Naive thymus-derived CD4-positive, alpha-beta T cell (primary cell): ENCODE measurements at regions of chr11 and their contacts with region 1.

Region 1: DNA sequence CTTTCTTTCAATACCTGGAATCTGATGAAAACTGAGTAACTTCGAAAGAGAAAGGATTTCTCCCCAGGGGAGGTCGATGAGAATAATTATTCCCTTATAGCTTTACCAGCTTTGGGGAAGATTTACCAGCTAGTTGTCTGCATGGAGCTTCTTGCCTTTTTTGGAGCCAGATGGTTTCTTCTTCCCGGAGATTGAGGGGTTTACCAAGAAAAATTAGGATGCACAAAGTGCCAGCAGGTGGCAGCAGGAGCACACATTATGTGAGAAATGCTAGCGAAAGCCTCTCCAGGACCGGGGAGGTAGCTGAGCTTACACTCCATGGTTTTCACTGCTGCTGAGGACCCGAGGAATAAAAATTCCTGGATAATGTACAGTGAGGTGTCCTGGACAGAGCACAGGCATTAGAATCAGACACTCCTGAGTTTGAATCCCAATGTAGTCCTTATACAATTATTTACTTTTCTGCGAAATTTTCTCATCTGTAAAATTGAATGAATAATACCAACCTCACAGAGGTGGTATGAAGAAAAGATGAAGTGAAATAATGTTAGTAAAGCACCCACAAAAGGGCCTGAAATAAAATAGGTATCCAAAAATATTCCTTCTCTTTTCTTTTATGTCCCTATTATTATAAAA is 46.0 kb upstream of the PARVA start:
- DNase-seq: peak; percentile 44 to 74 (median 67)
- ATAC-seq: peak; percentile 63
- H3K4me3 ChIP-seq: no peak overlapping the region
- H3K4me3 Mint-ChIP-seq: no peak overlapping the region
- H3K27ac ChIP-seq: no peak overlapping the region
- H3K27ac Mint-ChIP-seq: no peak overlapping the region
- H3K4me1 ChIP-seq: no peaks in the 10 kb centered on the region
- H3K4me1 Mint-ChIP-seq: peaks cover 0 to 12% (median 4%) of the 10 kb centered on the region in 7 donors
- H3K27me3 ChIP-seq: no peaks in the 10 kb centered on the region
- H3K27me3 Mint-ChIP-seq: peaks cover 0 to 4% (median 0%) of the 10 kb centered on the region in 5 donors

Region 2: GRCh38 chr11:12377824-12378593 is 46.7 kb after region 1 on chr11:
- CTCF ChIA-PET with region 1: interaction called, 12 read pairs
- POLR2A ChIA-PET with region 1: interaction called, 4 read pairs
- intact Hi-C with region 1: loop called (anchors 1 to 5 kb)
- DNase-seq: peak in 4 of 9 donors; percentile 18 to 37 (median 23)
- ATAC-seq: peak; percentile 36
- H3K4me3 ChIP-seq: peak overlapping the region; percentile 17
- H3K4me3 Mint-ChIP-seq: peak overlapping the region; percentile 68 to 89 (median 84)
- H3K27ac ChIP-seq: no peak overlapping the region
- H3K27ac Mint-ChIP-seq: peak overlapping the region in 5 of 9 donors; percentile 54 to 82 (median 65)
- H3K4me1 ChIP-seq: peaks cover 0 to 4% of the 10 kb centered on the region in 2 donors
- H3K4me1 Mint-ChIP-seq: peaks cover 6 to 19% (median 14%) of the 10 kb centered on the region in 7 donors
- H3K27me3 ChIP-seq: no peaks in the 10 kb centered on the region
- H3K27me3 Mint-ChIP-seq: peaks cover 24 to 73% (median 49%) of the 10 kb centered on the region in 5 donors

Region 3: DNA sequence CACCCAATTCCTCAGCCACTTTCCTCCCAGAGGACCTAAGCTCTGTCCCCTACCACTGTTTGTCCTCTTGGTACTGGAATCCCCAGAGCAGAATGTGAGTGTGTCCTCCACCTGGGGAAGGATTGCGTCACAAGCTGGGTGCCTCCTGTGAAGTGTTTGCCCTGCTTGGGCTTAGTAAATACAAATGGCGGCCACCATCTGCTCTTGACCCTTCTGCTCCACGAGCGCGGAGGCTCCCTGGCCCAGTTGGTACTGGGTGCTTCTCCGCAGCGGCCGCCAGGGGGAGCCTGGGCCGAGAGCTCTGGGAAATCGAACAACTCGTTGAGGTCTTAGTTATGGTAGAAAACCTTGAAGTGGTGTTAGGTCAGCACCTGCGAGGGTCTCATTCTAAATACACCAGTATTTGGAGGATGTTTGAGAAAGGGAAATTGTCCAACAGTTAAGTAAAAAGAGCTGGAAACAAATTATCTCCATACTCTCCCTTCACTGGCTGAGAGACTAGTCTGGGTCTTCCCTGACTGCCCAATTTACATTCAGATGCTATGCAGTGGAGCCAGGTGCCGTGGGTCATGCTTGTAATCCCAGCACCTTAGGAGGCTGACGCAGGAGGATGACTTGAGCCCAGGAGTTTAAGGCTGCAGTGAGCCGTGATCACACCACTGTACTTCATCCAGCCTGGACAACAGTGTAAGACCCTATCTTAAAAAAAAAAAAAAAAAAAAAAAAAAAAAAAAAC is 268.2 kb after region 1 on chr11:
- CTCF ChIA-PET with region 1: no interaction called
- POLR2A ChIA-PET with region 1: no interaction called
- intact Hi-C with region 1: loop called (anchors 2 to 5 kb)
- DNase-seq: peak in 5 of 9 donors; percentile 8 to 57 (median 13)
- ATAC-seq: peak; percentile 26
- H3K4me3 ChIP-seq: no peak overlapping the region
- H3K4me3 Mint-ChIP-seq: no peak overlapping the region
- H3K27ac ChIP-seq: no peak overlapping the region
- H3K27ac Mint-ChIP-seq: peak overlapping the region in 1 of 9 donors; percentile 25
- H3K4me1 ChIP-seq: peaks cover 0 to 17% of the 10 kb centered on the region in 2 donors
- H3K4me1 Mint-ChIP-seq: peaks cover 3 to 25% (median 18%) of the 10 kb centered on the region in 7 donors
- H3K27me3 ChIP-seq: no peaks in the 10 kb centered on the region
- H3K27me3 Mint-ChIP-seq: peaks cover 16 to 45% (median 28%) of the 10 kb centered on the region in 5 donors

Region 4: DNA sequence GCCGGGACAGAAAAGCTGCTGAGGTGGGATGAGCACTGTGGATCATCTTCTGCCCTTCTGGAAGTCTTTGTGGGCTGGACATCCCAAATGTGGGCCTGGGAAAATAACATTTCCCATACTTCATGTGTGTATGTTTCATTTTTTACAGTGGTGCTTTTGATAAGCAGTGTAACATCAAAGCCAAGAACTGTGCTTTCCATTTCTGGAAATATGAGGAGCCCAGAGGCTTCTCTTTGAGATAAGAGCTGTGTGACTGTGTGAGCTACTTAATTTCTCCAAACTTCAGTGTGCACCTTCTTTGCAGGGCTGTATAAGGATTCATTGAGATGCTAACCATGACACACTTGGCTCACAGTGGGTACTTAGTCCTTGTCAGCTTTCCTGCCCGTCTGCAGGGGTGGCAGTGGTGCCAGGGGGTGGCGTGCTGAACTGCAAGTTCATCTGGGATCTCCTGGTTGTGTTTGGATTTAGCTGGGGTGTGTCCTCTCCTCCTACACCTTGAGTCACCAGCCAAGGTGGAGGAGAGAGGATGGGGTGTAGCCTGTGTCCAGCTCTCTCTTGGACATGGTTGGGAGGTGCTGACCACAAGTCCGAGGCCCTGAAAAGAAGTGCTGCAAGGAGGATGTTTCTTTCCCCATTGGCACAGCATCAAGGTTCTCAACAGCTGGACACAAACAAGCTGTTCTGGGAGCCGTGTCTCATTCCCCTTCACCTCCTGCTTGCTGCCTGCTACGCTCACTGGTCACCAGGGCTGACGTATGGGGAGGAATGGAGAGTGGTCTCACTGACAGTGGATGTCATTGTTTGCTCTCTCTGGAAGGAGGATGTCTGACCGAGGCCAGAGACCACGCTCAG is 482.2 kb after region 1 on chr11:
- CTCF ChIA-PET with region 1: no interaction called
- POLR2A ChIA-PET with region 1: no interaction called
- intact Hi-C with region 1: loop called in 1 of 2 experiments (anchors 2 kb)
- DNase-seq: no peak
- ATAC-seq: no peak
- H3K4me3 ChIP-seq: no peak overlapping the region
- H3K4me3 Mint-ChIP-seq: peak overlapping the region in 1 of 10 donors; percentile 5
- H3K27ac ChIP-seq: no peak overlapping the region
- H3K27ac Mint-ChIP-seq: no peak overlapping the region
- H3K4me1 ChIP-seq: no peaks in the 10 kb centered on the region
- H3K4me1 Mint-ChIP-seq: peaks cover 0 to 62% (median 5%) of the 10 kb centered on the region in 7 donors
- H3K27me3 ChIP-seq: no peaks in the 10 kb centered on the region
- H3K27me3 Mint-ChIP-seq: peaks cover 28 to 40% (median 32%) of the 10 kb centered on the region in 5 donors

Region 5: GRCh38 chr11:13183094-13183825 is 851.9 kb after region 1 on chr11:
- CTCF ChIA-PET with region 1: no interaction called
- POLR2A ChIA-PET with region 1: no interaction called
- intact Hi-C with region 1: loop called in 1 of 2 experiments (anchors 1 kb)
- DNase-seq: peak in 4 of 9 donors; percentile 3 to 15 (median 12)
- ATAC-seq: peak; percentile 62
- H3K4me3 ChIP-seq: no peak overlapping the region
- H3K4me3 Mint-ChIP-seq: peak overlapping the region in 8 of 10 donors; percentile 10 to 58 (median 36)
- H3K27ac ChIP-seq: no peak overlapping the region
- H3K27ac Mint-ChIP-seq: no peak overlapping the region
- H3K4me1 ChIP-seq: no peaks in the 10 kb centered on the region
- H3K4me1 Mint-ChIP-seq: peaks cover 0 to 9% (median 6%) of the 10 kb centered on the region in 7 donors
- H3K27me3 ChIP-seq: no peaks in the 10 kb centered on the region
- H3K27me3 Mint-ChIP-seq: peaks cover 5 to 16% (median 9%) of the 10 kb centered on the region in 5 donors